Mammary epithelial cell (primary cell): ENCODE measurements at regions of chr9 and their contacts with region 1.

Region 1: DNA sequence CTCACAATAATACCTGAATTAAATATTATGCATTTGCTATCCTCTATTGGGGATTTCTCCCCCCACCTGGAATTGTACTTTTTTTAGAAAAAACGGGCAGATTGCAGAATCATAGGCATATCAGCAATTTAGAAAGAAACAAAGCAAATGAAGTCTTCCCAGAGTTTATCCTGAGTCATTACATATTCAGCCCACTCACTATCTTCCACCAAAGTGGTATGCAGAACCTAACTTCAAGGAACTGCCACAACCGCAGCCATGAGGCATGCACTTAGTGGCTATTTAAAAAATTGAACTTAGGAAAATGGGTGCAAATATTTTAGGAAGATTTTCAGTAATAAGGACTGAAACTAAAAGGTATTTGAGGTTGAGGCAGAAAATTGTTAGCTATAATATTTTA is 48.6 kb downstream of the UBAP1 start:
- DNase-seq: no peak
- H3K4me3 ChIP-seq: no peak overlapping the region
- H3K27ac ChIP-seq: no peak overlapping the region
- H3K4me1 ChIP-seq: peaks cover 18% of the 10 kb centered on the region
- H3K27me3 ChIP-seq: no peaks in the 10 kb centered on the region
- CTCF ChIP-seq: no peak

Region 2: DNA sequence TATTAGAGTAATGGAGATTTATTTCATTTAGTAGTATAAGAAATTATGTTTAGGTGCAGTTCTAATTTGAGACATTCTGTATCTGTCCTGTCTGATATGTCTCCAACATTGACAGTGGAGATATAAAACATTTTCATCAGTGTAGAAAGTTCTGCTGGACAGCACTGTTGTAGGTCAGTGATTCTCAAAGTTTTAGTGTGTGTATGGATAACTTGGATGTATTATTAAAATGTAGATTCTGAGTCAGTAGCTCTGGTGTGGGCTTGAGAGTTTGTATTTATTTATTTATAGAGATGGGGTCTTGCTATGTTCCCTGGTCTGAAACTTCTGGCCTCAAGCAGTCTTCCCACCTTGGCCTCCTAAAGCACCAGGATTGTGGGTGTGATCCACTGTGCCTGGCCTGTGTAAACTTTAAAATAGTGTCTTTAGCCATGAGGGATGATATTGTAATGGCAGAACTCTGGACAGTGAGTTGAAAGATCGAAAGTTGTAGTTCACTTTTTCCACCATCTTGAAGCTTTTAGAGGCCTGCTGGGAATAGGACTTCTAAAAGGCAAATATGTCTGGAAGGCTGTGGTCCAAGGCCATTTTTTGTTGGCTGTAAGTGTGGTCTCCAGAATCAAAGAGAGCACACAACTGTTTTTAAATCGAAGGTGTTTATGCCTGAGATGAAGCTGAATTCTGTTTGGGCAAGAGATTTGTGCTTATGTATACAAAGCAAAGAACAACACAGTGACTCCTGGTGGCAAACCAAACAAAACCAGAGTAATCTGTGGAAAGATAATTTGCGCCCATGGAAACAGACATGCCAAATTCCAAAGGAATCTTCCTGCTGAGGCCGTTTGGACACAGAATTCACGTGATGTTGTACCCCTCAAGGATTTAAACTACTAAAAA is 36.2 kb before region 1 on chr9:
- CTCF ChIA-PET with region 1: no interaction called
- dilution Hi-C with region 1: loop called (anchors 5 kb)
- in situ Hi-C with region 1: no loop called
- intact Hi-C with region 1: no loop called
- DNase-seq: no peak
- H3K4me3 ChIP-seq: no peak overlapping the region
- H3K27ac ChIP-seq: no peak overlapping the region
- H3K4me1 ChIP-seq: peaks cover 11% of the 10 kb centered on the region
- H3K27me3 ChIP-seq: no peaks in the 10 kb centered on the region
- CTCF ChIP-seq: peak in 1 of 2 donors; percentile 39